ENCODE measurements at regions of chr10 and their contacts with region 1.

Region 1: GRCh38 chr10:33258967-33259366 is 75.5 kb downstream of the NRP1 start:
- DNase-seq: no peak
- H3K4me3 ChIP-seq: no peak overlapping the region
- H3K27ac ChIP-seq: peak overlapping the region; percentile 3
- H3K27me3 ChIP-seq: no peaks in the 10 kb centered on the region
- CTCF ChIP-seq: no peak

Region 2: DNA sequence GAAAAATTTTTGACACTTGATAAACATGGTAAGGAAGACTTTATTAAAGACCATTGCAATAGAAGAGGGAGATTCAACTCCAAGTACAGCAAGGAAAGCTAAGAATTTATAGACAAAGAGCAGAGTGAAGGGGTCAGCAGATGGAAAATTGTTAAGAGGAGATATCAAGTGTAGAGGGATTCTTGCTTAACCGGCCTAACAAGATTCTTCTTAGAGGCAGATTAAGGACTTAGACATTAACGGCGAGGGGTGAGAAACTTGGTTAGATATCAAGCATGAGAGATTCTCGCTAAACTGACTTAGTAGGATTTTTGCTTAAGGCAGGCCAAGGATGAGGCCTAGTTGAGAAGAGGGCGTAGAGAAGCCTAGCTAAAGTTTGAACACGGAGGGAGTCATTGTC is 376.9 kb before region 1 on chr10:
- CTCF ChIA-PET with region 1: no interaction called
- POLR2A ChIA-PET with region 1: no interaction called
- DNase-seq: no peak
- H3K4me3 ChIP-seq: no peak overlapping the region
- H3K27ac ChIP-seq: no peak overlapping the region
- H3K27me3 ChIP-seq: no peaks in the 10 kb centered on the region
- CTCF ChIP-seq: no peak

Region 3: GRCh38 chr10:33216661-33217427 is 42.1 kb before region 1 on chr10:
- CTCF ChIA-PET with region 1: interaction called, 10 read pairs
- POLR2A ChIA-PET with region 1: interaction called, 3 read pairs
- DNase-seq: no peak
- H3K4me3 ChIP-seq: no peak overlapping the region
- H3K27ac ChIP-seq: no peak overlapping the region
- H3K27me3 ChIP-seq: no peaks in the 10 kb centered on the region
- CTCF ChIP-seq: no peak

Region 4: GRCh38 chr10:33273295-33274002 is 14.5 kb after region 1 on chr10:
- CTCF ChIA-PET with region 1: interaction called, 4 read pairs
- POLR2A ChIA-PET with region 1: interaction called, 14 read pairs
- DNase-seq: peak; percentile 88
- H3K4me3 ChIP-seq: peak overlapping the region; percentile 49
- H3K27ac ChIP-seq: peak overlapping the region; percentile 96
- H3K27me3 ChIP-seq: no peaks in the 10 kb centered on the region
- CTCF ChIP-seq: peak; percentile 33

Measured in AG04450 (cell line).